ENCODE measurements at regions of chr2 and their contacts with region 1.

Region 1: DNA sequence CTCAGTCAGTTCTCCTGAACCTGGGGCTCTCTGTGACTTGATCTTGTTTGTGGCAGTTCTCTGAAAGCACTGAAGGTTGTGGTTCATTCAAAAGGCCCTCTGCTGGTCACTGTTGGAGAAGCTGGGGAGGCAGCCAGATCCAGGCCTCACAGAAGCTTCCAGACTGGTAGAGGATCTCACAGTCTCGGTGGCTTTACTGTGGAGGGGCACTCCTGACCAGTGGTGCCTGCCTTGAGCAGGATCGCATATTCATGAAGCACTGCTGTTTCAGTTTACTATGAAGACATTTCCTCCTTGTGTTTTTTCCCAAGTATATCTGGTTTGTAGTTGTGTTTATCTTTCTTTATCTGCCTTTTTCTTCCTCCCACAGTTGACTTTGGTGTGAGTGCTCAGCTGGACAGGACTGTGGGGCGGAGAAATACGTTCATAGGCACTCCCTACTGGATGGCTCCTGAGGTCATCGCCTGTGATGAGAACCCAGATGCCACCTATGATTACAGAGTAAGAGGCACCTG is 133.9 kb downstream of the MAP4K4 start:
- DNase-seq: peak; percentile 78 to 89
- H3K4me3 ChIP-seq: no peak overlapping the region
- H3K27ac ChIP-seq: peak overlapping the region; percentile 20 to 70 (median 69)
- H3K4me1 ChIP-seq: peaks cover 26 to 57% (median 42%) of the 10 kb centered on the region in 4 donors
- H3K27me3 ChIP-seq: no peaks in the 10 kb centered on the region
- CTCF ChIP-seq: peak in 5 of 7 experiments; percentile 71 to 81 (median 75)
- EP300 ChIP-seq: no peak
- POLR2A ChIP-seq: no peak

Region 2: GRCh38 chr2:101419096-101419663 is 412.2 kb before region 1 on chr2:
- intact Hi-C with region 1: loop called (anchors 10 kb)
- DNase-seq: peak; percentile 68 to 81
- H3K4me3 ChIP-seq: no peak overlapping the region
- H3K27ac ChIP-seq: no peak overlapping the region
- H3K4me1 ChIP-seq: no peaks in the 10 kb centered on the region
- H3K27me3 ChIP-seq: no peaks in the 10 kb centered on the region
- CTCF ChIP-seq: peak in 5 of 7 experiments; percentile 40 to 71 (median 61)
- EP300 ChIP-seq: no peak
- POLR2A ChIP-seq: no peak

Region 3: DNA sequence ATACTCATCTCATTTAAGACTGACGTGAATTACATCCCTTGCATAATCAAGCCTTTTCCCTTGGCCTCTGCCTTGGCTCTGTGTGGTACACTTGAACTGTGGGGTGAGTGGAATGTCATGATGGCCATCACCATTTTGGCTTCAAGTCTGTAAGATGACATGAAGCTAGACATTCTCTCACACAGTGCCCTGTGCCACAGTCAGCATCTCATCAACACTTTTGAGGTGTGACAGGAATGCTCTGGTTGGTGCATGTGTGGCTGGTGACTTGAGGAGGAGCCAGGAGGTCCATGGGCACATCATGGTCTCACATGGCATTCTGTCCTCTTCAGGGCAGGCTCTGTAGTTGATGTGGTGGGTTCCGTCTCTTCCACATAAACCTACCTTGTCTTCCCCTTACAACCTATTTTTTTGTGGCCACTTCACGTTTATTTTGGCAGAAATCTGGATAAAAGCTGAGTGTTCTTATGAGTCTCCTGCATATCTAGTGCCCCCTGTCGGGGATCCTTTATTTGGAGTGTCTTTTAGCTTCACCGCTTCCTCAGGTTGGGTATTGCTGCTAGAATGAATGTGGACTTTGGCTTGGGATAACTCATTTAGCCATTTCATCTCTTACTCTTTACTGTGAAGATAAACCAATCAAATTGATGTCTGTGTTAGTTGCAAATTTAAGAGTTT is 105.8 kb before region 1 on chr2:
- intact Hi-C with region 1: no loop called
- DNase-seq: no peak
- H3K4me3 ChIP-seq: no peak overlapping the region
- H3K27ac ChIP-seq: no peak overlapping the region
- H3K4me1 ChIP-seq: peaks cover 12 to 81% (median 50%) of the 10 kb centered on the region in 4 donors
- H3K27me3 ChIP-seq: no peaks in the 10 kb centered on the region
- CTCF ChIP-seq: no peak
- EP300 ChIP-seq: no peak
- POLR2A ChIP-seq: no peak

Measured in stomach (tissue), 19 donors.